ENCODE measurements at regions of chr11 and their contacts with region 1.

Region 1: DNA sequence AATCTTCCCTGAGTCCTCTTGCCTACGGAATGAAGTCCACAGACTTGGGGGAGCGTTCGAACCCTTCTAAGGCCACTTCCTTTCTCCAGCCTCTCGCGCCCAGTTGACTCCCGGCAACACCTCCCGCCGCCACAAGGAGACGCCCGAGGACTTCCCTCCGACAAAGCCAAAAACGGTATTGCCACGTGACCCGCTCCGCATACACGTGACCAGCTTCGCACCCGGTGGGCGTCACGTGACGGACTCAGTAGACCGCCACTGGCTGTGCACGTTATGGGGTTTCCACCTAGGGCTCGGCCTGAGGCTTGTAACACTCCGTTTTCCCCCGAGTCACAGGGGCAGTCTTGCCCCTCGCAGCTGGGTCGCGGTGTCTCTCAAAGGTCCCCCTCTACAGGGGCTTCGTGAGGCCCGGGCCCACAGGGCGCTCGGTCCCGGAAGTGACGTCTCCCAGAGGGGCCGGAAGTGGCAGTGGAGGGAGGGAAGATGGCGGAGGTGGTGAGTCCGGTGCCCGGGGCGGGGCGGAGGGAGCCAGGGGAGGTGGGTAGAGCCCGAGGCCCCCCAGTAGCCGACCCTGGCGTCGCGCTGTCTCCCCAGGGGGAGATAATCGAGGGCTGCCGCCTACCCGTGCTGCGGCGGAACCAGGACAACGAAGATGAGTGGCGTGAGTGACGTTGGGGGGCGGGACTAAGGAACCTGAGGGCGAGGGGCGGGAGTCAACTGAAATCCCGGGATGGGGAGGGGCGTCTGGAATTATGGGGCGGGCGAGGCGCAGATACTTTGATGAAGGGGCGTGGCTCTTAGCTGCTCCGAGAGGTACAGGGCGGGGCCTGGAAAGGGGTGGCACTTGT is at the start of gene KAT5:
- DNase-seq: peak; percentile 83
- H3K4me3 ChIP-seq: peak within 1 kb of the TSS; percentile 87
- CTCF ChIP-seq: peak; percentile 94

Region 2: GRCh38 chr11:65403607-65404121 is 308.3 kb before region 1 on chr11:
- CTCF ChIA-PET with region 1: no interaction called
- POLR2A ChIA-PET with region 1: no interaction called
- DNase-seq: no peak
- H3K4me3 ChIP-seq: no peak overlapping the region
- CTCF ChIP-seq: no peak

Region 3: DNA sequence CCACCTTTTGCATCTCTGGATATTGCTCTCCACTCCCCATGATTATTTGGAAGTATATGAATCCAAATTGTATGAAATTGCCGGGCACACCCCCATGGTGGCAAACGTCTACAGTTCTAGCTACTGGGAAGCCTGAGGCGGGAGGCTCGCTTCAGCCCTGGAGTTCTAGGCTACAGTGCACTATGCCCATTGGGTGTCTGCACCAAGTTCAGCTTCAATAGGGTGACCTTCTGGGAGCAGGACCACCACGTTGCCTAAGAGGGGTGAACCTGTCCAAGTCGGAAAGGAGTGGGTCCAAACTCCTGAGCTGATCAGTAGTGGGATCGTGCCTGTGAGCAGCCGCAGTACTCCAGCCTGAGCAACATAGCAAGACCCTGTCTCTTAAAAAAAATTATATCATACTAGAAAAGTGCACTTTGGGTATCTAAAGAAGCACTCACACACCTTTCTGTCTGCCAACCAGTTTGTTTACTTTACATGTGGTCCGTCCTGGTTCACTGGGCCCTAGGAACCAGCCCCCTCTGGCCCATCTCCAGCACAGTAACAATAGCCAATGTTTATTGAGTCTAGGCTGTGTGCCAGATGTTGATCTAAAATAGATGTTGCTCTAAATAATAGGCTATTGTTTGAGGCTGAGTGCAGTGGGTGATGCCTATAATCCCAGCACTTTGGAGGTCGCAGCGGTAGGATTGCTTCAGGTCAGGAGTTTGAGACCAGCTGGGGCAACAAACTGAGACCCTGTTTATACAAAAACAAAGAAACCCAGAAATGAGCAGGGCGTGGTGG is 16.4 kb before region 1 on chr11:
- CTCF ChIA-PET with region 1: interaction called, 18 read pairs
- POLR2A ChIA-PET with region 1: no interaction called
- DNase-seq: no peak
- H3K4me3 ChIP-seq: no peak overlapping the region
- CTCF ChIP-seq: no peak

Region 4: GRCh38 chr11:65779851-65780577 is 68.0 kb after region 1 on chr11:
- CTCF ChIA-PET with region 1: interaction called, 22 read pairs
- POLR2A ChIA-PET with region 1: no interaction called
- DNase-seq: no peak
- H3K4me3 ChIP-seq: peak overlapping the region; percentile 80
- CTCF ChIP-seq: peak; percentile 82

Region 5: GRCh38 chr11:65850831-65851811 is 139.1 kb after region 1 on chr11:
- CTCF ChIA-PET with region 1: interaction called, 11 read pairs
- POLR2A ChIA-PET with region 1: interaction called, 4 read pairs
- DNase-seq: no peak
- H3K4me3 ChIP-seq: no peak overlapping the region
- CTCF ChIP-seq: peak; percentile 54

Region 6: GRCh38 chr11:65945430-65945911 is 233.5 kb after region 1 on chr11 and contains the start of gene TSGA10IP:
- CTCF ChIA-PET with region 1: no interaction called
- POLR2A ChIA-PET with region 1: no interaction called
- DNase-seq: no peak
- H3K4me3 ChIP-seq: no peak within 1 kb of the TSS
- CTCF ChIP-seq: no peak

Region 7: GRCh38 chr11:65988791-65989592 is 277.0 kb after region 1 on chr11:
- CTCF ChIA-PET with region 1: interaction called, 20 read pairs
- POLR2A ChIA-PET with region 1: no interaction called
- DNase-seq: peak; percentile 79
- H3K4me3 ChIP-seq: no peak overlapping the region
- CTCF ChIP-seq: peak; percentile 94

Measured in AG04449 (cell line).